HEK293 (cell line): ENCODE measurements at regions of chr3 and their contacts with region 1.

Region 1: DNA sequence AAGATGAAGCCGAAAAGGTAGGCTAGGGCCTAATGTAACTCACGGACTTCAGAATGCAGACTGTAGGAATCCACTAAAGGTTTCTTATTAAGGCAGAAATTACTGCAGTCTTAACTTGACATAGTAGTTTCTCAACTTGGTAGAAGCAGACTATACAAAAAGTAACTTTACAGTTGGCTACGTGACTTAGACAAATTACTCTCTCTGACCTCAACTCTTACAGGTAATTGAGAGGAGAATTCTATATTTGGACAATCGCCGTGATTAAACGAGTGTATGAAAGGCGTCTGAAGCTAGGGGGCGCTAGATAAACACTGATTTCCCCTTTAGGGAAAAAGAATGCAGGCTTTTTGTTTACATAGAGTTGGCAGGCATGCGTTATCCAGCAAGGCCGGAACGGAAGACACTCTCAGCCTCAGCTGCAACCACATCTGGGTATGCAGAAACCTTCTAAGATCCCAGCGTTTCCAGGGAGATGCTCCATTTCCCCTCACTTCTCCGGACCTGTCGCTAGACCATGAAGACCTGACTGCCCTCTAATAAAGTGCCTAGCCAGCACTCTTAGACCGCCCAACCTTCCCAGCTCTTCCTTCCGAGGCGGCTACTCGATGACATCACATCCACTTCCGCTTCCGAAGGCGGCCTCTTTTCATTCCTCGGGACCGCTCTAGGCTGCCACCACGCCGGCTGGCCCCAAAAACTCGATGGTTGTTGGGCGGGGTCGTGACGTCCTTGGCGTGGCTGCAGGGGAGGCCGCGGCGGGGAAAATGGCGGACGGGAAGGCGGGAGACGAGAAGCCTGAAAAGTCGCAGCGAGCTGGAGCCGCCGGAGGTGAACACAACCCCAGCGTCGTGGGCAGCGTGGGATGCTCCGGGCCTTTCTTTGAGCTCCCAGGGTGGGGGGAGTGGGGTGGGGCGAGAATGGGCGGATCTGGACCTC is at the start of gene PCNP:
- H3K4me3 ChIP-seq: peak within 1 kb of the TSS; percentile 89
- H3K27ac ChIP-seq: peak within 1 kb of the TSS; percentile 96
- H3K4me1 ChIP-seq: no peaks in the 10 kb centered on the region
- CTCF ChIP-seq: peak; percentile 69

Region 2: DNA sequence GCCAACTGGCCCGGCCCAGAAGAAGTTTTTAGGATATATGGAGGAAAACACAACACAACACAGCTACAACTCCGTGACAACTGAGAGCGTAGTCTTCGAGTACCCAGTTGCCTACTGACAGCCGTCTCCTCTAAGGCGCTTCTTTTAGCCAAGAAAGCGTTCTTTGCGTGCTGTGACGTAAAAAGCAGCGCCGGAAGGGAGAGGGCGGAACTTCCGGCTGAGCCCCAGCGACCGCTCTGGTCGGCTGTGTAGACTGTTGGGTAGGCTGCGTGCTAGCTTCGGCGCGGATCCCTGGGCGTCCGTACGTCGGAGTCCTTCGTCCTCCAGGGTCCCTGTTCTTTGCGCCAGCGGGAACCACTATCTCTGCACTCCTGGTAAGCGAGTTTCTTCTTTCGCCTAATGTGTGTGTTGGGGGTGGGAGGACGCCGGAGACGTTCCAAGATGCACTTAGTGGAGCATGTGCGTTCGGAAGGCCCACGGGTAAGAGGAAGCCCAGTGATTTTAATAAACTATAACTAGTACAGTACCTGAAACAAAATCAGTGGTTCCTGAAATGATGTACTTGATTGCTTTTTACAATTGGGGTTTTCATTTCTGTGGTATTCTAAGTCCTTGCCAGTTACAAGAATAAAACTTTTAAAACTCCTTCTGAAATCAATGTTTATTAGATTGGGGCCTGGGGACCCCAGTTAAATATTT is 11.9 kb before region 1 on chr3 and contains the start of gene TRMT10C:
- CTCF ChIA-PET with region 1: no interaction called
- POLR2A ChIA-PET with region 1: interaction called, 18 read pairs
- H3K4me3 ChIP-seq: peak within 1 kb of the TSS; percentile 98
- H3K27ac ChIP-seq: peak within 1 kb of the TSS; percentile 58
- H3K4me1 ChIP-seq: 0 out of 2 replicates have a peak, but pooled peaks cover 2% of the 10 kb centered on the region
- CTCF ChIP-seq: no peak

Region 3: GRCh38 chr3:101676765-101677435 is 103.2 kb after region 1 on chr3 and contains the start of gene ZBTB11:
- CTCF ChIA-PET with region 1: no interaction called
- POLR2A ChIA-PET with region 1: interaction called, 18 read pairs
- H3K4me3 ChIP-seq: peak within 1 kb of the TSS; percentile 94
- H3K27ac ChIP-seq: peak within 1 kb of the TSS; percentile 71
- H3K4me1 ChIP-seq: no peaks in the 10 kb centered on the region
- CTCF ChIP-seq: no peak